Activated CD4-positive, alpha-beta T cell treated with anti-CD3 and anti-CD28 coated beads for 36 hours (primary cell): ENCODE measurements at regions of chr11 and their contacts with region 1.

Region 1: GRCh38 chr11:107232451-107232850 is 214.2 kb upstream of the GUCY1A2 start:
- DNase-seq: no peak
- ATAC-seq: no peak
- H3K4me3 Mint-ChIP-seq: no peak overlapping the region
- H3K27ac Mint-ChIP-seq: no peak overlapping the region
- H3K4me1 Mint-ChIP-seq: no peaks in the 10 kb centered on the region
- H3K27me3 Mint-ChIP-seq: no peaks in the 10 kb centered on the region

Region 2: DNA sequence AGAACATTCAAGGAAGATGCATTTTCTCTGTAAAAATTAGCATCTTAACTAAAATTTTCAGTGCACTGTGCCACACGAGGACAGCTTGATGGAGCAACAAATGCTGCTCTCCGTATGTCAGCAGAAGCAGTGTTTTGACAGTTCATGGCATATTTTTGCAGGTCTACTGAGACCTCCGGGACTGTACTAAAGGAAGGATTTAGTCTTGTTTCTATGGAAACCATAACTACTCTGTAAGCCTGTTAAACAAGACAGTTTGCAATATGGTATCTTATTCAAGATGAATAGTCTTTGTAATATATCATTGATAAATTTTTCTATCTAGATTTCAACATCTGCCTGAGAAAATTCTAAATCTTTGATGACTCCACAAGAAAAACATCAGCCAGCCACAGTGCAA is 30.2 kb before region 1 on chr11:
- CTCF ChIA-PET with region 1: no interaction called
- POLR2A ChIA-PET with region 1: no interaction called
- intact Hi-C with region 1: loop called in 1 of 2 experiments (anchors 1 kb)
- DNase-seq: no peak
- ATAC-seq: no peak
- H3K4me3 Mint-ChIP-seq: no peak overlapping the region
- H3K27ac Mint-ChIP-seq: no peak overlapping the region
- H3K4me1 Mint-ChIP-seq: no peaks in the 10 kb centered on the region
- H3K27me3 Mint-ChIP-seq: no peaks in the 10 kb centered on the region

Region 3: DNA sequence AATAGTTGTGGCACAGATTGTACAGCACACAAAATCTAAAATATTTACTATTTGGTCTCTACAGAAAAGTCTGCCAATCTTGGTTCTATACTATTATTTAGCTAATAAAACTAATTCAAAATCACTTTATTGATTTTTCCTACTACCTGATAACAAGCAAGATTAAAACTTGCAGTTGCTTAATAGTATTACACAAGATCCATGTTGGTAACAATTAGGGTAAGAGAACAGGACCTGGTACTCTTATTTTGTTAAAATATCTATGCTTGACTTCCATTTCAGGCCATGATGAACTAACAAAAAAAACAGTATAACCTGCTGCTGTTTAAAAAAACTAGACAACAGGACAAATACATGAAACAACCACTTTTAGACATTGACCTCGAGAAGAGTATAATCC is 172.8 kb after region 1 on chr11:
- CTCF ChIA-PET with region 1: no interaction called
- POLR2A ChIA-PET with region 1: no interaction called
- intact Hi-C with region 1: no loop called
- DNase-seq: no peak
- ATAC-seq: no peak
- H3K4me3 Mint-ChIP-seq: no peak overlapping the region
- H3K27ac Mint-ChIP-seq: no peak overlapping the region
- H3K4me1 Mint-ChIP-seq: no peaks in the 10 kb centered on the region
- H3K27me3 Mint-ChIP-seq: no peaks in the 10 kb centered on the region